Breast epithelium (tissue), 4 donors: ENCODE measurements at regions of chrX and their contacts with region 1.

Region 1: DNA sequence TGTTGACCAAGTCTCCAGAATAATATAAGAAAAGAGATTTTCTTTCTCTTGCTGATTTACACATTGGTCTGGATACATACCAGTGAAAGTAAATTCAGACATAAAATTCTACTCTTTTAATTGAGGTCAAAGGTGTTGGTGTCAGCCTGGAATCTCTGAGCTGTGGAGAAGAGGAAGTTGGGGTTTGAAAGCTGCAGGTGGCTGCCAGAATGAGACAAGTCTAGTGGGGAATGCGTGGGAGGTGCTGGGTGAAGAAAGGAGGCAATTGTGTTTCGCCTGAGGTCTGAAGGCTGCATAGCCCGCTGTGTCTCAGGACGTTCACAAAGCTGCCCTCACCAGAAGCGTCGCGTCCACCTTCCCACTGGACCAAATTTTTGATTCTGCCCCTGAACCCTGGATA is 31.2 kb downstream of the PHEX start:
- DNase-seq: no peak
- H3K4me3 ChIP-seq: no peak overlapping the region
- H3K27ac ChIP-seq: no peak overlapping the region
- H3K4me1 ChIP-seq: no peaks in the 10 kb centered on the region
- H3K27me3 ChIP-seq: peaks cover 0 to 7% of the 10 kb centered on the region in 2 donors
- CTCF ChIP-seq: no peak
- POLR2A ChIP-seq: no peak

Region 2: GRCh38 chrX:20412871-20413486 is 1650.3 kb before region 1 on chrX:
- intact Hi-C with region 1: no loop called
- DNase-seq: no peak
- H3K4me3 ChIP-seq: no peak overlapping the region
- H3K27ac ChIP-seq: no peak overlapping the region
- H3K4me1 ChIP-seq: no peaks in the 10 kb centered on the region
- H3K27me3 ChIP-seq: peaks cover 0 to 36% of the 10 kb centered on the region in 2 donors
- CTCF ChIP-seq: no peak
- POLR2A ChIP-seq: no peak

Region 3: DNA sequence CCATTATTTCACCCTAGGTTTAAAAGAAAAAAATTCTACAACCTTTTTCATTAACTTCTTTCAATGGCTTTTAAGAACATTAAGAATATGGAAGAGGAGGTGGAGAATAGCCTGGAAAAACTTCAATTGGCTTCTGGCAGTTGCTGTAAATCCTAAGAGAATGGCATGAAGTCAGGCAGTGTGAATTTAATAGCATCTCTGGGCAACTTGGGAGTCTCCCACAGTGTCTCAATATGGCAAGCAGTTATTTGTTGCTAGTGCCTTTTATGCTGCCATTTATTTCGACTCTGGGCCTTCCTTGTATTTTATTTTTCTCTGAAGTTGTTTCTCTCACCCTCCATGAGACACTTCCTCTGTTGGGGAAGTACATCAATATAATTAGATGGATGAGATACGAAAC is 531.5 kb after region 1 on chrX:
- intact Hi-C with region 1: loop called (anchors 5 kb)
- DNase-seq: no peak
- H3K4me3 ChIP-seq: no peak overlapping the region
- H3K27ac ChIP-seq: no peak overlapping the region
- H3K4me1 ChIP-seq: no peaks in the 10 kb centered on the region
- H3K27me3 ChIP-seq: peaks cover 0 to 5% of the 10 kb centered on the region in 2 donors
- CTCF ChIP-seq: no peak
- POLR2A ChIP-seq: no peak